Activated T-helper 2 cell treated with anti-CD3 and anti-CD28 coated beads, Interferon-gamma antibody, Interleukin-2, Interleukin-4, amounts not matched to agents 10 μg/mL and 5 μg/mL and 100 μg/mL, durations not matched to agents 14 hours and 24 hours and 36 hours (primary cell): ENCODE measurements at regions of chr4 and their contacts with region 1.

Region 1: GRCh38 chr4:147683717-147684700 is at the start of gene PRMT9:
- DNase-seq: peak; percentile 84
- H3K4me3 Mint-ChIP-seq: peak within 1 kb of the TSS; percentile 93
- H3K27ac Mint-ChIP-seq: peak within 1 kb of the TSS; percentile 93
- H3K4me1 Mint-ChIP-seq: peaks cover 26% of the 10 kb centered on the region
- H3K27me3 Mint-ChIP-seq: peaks cover 3% of the 10 kb centered on the region
- total RNA-seq, gene PRMT9: 8.4 and 8.9 TPM in 2 replicates

Region 2: GRCh38 chr4:146981651-146982050 is 702.4 kb before region 1 on chr4:
- intact Hi-C with region 1: no loop called
- DNase-seq: no peak
- H3K4me3 Mint-ChIP-seq: no peak overlapping the region
- H3K27ac Mint-ChIP-seq: no peak overlapping the region
- H3K4me1 Mint-ChIP-seq: no peaks in the 10 kb centered on the region
- H3K27me3 Mint-ChIP-seq: no peaks in the 10 kb centered on the region

Region 3: GRCh38 chr4:147633113-147633512 is 50.9 kb before region 1 on chr4:
- intact Hi-C with region 1: no loop called
- DNase-seq: no peak
- H3K4me3 Mint-ChIP-seq: no peak overlapping the region
- H3K27ac Mint-ChIP-seq: no peak overlapping the region
- H3K4me1 Mint-ChIP-seq: no peaks in the 10 kb centered on the region
- H3K27me3 Mint-ChIP-seq: no peaks in the 10 kb centered on the region

Region 4: DNA sequence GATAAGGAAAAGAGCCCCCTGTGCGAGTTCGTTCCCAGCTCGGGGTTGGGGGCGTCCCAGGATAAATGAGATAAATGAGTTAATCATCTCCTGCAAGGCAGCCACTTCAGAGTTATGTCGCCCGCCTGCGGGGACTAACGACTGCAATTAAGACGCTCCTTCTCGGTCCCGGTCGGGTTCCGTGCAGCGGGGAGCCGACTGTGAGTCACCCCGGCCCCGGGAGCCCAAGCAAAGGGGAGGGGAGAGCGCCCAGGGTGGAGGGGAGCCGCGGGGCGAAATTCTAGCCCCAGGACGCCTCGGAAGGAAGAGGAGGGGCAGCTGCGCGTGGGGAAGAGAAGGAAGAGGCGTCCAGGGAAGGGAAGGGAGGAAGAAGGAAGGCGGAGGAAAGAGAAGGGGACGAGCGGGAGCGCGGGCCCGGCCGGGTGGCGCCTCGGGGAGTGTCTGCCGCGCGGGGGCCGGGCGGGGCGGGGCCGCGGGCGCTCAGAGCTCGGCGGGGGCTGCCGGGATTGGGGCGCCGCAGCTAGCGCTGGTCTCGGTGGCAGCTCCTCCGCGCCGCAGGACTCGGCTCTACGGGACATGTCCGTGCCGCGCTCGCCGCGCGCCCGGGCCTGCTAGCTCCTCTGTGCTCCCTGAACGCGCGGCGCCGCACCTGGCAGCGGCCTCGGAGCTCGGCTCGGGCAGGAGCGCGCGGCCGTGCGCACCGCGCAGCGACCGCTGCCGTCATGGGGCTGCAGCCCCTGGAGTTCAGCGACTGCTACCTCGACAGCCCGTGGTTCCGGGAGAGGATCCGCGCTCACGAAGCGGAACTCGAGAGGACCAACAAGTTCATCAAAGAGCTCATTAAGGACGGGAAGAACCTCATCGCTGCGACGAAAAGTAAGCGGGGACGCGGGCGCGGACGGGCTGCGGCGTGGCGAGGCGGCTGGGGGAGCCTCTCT is 47.8 kb after region 1 on chr4 and contains the start of gene ARHGAP10:
- intact Hi-C with region 1: loop called (anchors 2 kb)
- DNase-seq: peak; percentile 59
- H3K4me3 Mint-ChIP-seq: peak within 1 kb of the TSS; percentile 96
- H3K27ac Mint-ChIP-seq: peak within 1 kb of the TSS; percentile 91
- H3K4me1 Mint-ChIP-seq: peaks cover 44% of the 10 kb centered on the region
- H3K27me3 Mint-ChIP-seq: peaks cover 18% of the 10 kb centered on the region
- total RNA-seq, gene ARHGAP10: 18.5 TPM in 2 replicates

Region 5: DNA sequence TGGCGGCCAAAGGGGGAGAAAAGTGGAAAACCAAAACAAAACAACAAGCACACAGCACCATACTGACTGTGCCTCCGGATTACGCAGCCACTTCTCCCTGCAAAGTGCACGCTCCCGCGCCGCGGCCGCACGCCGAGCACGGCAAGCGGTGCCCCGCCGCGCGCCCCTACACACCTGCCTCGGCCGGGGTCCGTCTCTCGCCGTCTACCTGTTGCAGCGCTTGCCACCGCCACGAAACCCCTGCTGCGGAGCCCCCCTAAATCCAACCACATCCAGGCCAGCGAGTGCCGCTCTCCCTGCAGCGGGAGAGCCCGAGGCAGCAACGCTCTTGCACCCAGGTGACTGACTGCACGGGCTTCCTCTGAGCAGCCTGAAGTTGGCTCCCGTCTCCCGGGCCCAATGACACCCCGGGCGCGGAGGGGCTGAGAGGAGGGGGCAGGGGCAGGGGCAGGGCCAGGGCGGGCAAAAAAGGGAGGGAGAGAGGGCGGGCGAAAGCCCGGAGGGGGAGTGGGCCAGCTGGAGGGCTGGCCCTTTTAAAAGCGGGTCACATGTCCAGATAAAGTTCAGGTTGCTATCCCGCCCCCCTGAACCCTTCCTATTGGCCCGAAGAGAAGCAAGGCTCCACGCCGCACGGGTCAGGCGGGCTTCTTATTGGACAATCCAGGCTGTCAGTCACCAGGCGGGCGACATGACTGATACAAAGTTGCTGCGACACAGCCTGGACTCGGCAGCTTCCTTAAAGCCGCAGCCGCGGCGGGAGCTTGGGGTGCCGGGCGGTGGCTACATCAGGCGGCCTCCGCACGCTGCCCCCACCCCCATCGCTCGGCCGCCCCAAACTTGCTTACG is 758.2 kb after region 1 on chr4 and contains the start of gene NR3C2:
- intact Hi-C with region 1: loop called (anchors 10 kb)
- DNase-seq: peak; percentile 95
- H3K4me3 Mint-ChIP-seq: peak within 1 kb of the TSS; percentile 93
- H3K27ac Mint-ChIP-seq: peak within 1 kb of the TSS; percentile 46
- H3K4me1 Mint-ChIP-seq: peaks cover 19% of the 10 kb centered on the region
- H3K27me3 Mint-ChIP-seq: peaks cover 51% of the 10 kb centered on the region
- total RNA-seq, gene NR3C2: 0.21 and 0.32 TPM in 2 replicates